Sciatic nerve (tissue), 2 donors: ENCODE measurements at regions of chr9 and their contacts with region 1.

Region 1: GRCh38 chr9:71844808-71845207 is 66.2 kb downstream of the ABHD17B start:
- DNase-seq: no peak
- ATAC-seq: no peak

Region 2: DNA sequence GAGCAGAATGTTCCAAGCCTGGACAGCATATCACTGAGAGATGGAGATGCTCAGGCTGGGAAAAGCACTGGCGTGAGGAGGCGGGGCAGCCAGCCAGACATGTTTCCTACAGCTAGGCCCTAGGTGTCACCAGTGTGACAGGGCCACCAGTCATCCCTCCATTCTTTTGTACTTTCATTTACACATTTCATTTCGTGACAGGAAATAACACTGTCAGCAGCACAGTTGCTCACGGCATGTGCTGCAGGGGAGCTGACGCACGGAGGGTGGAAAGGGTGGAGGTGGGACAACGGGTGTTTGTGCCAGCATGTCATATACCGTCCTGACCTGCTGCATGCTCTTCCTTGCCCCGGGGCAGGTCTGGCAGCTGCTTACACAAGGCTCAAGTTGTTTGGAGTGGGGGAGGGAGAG is 61.7 kb before region 1 on chr9:
- intact Hi-C with region 1: loop called (anchors 2 kb)
- DNase-seq: no peak
- ATAC-seq: peak; percentile 67